ENCODE measurements at regions of chr15 and their contacts with region 1.

Region 1: GRCh38 chr15:26628879-26629529 is 143.9 kb downstream of the GABRB3 start:
- DNase-seq: no peak
- H3K4me3 ChIP-seq: no peak overlapping the region
- H3K27ac ChIP-seq: no peak overlapping the region
- H3K4me1 ChIP-seq: no peaks in the 10 kb centered on the region
- H3K27me3 ChIP-seq: no peaks in the 10 kb centered on the region
- CTCF ChIP-seq: no peak

Region 2: DNA sequence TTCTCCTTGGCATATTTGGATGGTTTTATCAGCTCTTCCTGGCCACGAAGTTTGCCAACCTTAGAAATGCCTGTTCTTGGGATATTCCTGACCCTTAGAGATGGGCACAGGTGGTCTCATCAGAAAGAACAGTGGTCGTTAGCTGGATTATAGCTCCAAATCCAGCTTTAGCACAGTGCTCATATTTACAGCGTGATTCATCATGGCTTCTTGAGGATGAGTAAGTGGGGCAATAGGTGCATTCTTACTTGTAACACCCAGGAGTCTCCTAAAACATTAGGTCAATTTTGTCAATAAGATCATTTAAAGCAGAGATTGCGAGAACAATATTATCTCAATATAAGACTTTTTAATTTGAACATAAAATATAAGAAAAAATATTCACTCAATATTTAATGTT is 48.1 kb before region 1 on chr15:
- CTCF ChIA-PET with region 1: no interaction called
- dilution Hi-C with region 1: no loop called
- in situ Hi-C with region 1: no loop called
- intact Hi-C with region 1: no loop called
- DNase-seq: no peak
- H3K4me3 ChIP-seq: no peak overlapping the region
- H3K27ac ChIP-seq: no peak overlapping the region
- H3K4me1 ChIP-seq: no peaks in the 10 kb centered on the region
- H3K27me3 ChIP-seq: no peaks in the 10 kb centered on the region
- CTCF ChIP-seq: no peak

Region 3: GRCh38 chr15:26722621-26723160 is 93.7 kb after region 1 on chr15:
- CTCF ChIA-PET with region 1: no interaction called
- dilution Hi-C with region 1: loop called (anchors 10 kb)
- in situ Hi-C with region 1: no loop called
- intact Hi-C with region 1: no loop called
- DNase-seq: no peak
- H3K4me3 ChIP-seq: no peak overlapping the region
- H3K27ac ChIP-seq: no peak overlapping the region
- H3K4me1 ChIP-seq: no peaks in the 10 kb centered on the region
- H3K27me3 ChIP-seq: no peaks in the 10 kb centered on the region
- CTCF ChIP-seq: no peak

Measured in mammary epithelial cell (primary cell).